ENCODE measurements at regions of chrX and their contacts with region 1.

Region 1: DNA sequence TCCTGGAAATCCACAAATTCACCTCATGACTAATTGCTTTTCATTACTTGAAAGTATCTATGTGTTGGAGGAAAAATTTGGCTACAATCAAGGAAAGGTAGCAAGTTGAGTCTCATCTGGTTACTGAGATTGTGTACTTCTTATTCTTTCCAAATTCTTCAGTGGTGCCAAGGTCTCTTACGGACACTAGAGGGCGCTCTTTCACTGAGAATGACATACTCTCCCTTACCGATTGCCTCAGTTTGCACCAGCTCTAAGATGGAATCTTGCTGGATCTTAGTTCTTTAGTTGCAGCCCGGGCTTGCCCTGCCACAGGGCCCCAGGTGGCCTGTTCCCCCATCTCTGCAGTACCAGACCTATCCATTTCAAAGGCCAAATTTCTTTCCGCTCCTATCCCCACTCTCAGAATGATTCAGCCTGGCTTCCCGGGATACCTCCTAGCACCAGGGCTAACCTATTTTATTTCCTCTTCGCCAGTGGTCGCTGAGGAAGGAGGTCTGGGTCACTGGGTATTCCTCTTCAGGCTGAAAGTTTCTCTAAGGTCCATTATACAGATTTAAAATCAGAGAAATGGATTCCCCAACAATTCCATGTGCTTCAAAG is 24.6 kb upstream of the GPR50 start:
- DNase-seq: peak; percentile 54
- ATAC-seq: no peak
- H3K4me3 ChIP-seq: no peak overlapping the region
- H3K4me3 Mint-ChIP-seq: no peak overlapping the region
- H3K27ac ChIP-seq: no peak overlapping the region
- H3K27ac Mint-ChIP-seq: no peak overlapping the region
- H3K4me1 ChIP-seq: no peaks in the 10 kb centered on the region
- H3K4me1 Mint-ChIP-seq: no peaks in the 10 kb centered on the region
- H3K27me3 ChIP-seq: no peaks in the 10 kb centered on the region
- H3K27me3 Mint-ChIP-seq: peaks cover 4% of the 10 kb centered on the region
- CTCF ChIP-seq: peak; percentile 65

Region 2: DNA sequence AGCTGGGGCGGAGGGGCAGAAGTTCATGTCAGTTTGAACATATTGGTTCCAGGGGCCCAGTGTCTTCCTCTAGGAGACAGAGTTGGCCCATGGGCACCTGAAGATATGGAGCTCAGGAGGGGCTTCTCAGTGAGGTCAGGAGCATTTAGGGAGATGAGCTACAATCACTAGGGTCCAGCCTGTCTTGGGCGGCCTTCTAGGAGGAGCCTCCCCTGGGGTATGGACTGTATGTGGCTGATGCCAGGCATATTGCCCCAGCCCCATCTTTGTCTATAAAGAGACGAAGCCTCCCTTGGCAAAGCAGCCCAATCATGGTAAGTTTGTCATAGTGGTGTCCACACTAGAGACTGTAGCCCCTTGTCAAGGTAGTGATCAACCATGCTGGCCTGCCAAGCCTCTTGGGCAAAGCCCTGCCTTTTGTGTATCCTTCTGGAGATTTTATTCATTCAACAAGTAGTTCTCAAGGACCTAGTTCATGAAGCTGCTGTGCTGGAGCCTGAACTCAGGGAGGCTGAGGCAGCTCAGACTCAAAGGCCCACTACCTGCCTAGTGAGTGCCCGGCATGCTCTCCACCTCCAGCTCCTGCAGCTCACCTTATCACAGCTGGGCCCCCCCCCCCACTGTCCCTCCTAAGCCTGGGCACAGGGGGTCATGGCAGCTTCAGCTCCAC is 577.4 kb after region 1 on chrX:
- CTCF ChIA-PET with region 1: no interaction called
- POLR2A ChIA-PET with region 1: no interaction called
- intact Hi-C with region 1: no loop called
- DNase-seq: no peak
- ATAC-seq: no peak
- H3K4me3 ChIP-seq: no peak overlapping the region
- H3K4me3 Mint-ChIP-seq: no peak overlapping the region
- H3K27ac ChIP-seq: no peak overlapping the region
- H3K27ac Mint-ChIP-seq: no peak overlapping the region
- H3K4me1 ChIP-seq: no peaks in the 10 kb centered on the region
- H3K4me1 Mint-ChIP-seq: no peaks in the 10 kb centered on the region
- H3K27me3 ChIP-seq: no peaks in the 10 kb centered on the region
- H3K27me3 Mint-ChIP-seq: peaks cover 3% of the 10 kb centered on the region
- CTCF ChIP-seq: no peak

Region 3: GRCh38 chrX:152817078-152817764 is 1665.5 kb after region 1 on chrX:
- CTCF ChIA-PET with region 1: no interaction called
- POLR2A ChIA-PET with region 1: no interaction called
- intact Hi-C with region 1: loop called (anchors 5 kb)
- DNase-seq: no peak
- ATAC-seq: no peak
- H3K4me3 ChIP-seq: no peak overlapping the region
- H3K4me3 Mint-ChIP-seq: no peak overlapping the region
- H3K27ac ChIP-seq: no peak overlapping the region
- H3K27ac Mint-ChIP-seq: no peak overlapping the region
- H3K4me1 ChIP-seq: no peaks in the 10 kb centered on the region
- H3K4me1 Mint-ChIP-seq: no peaks in the 10 kb centered on the region
- H3K27me3 ChIP-seq: no peaks in the 10 kb centered on the region
- H3K27me3 Mint-ChIP-seq: peaks cover 8% of the 10 kb centered on the region
- CTCF ChIP-seq: no peak

Measured in B cell (primary cell).